Activated CD4-positive, alpha-beta T cell treated with anti-CD3 and anti-CD28 coated beads, Interleukin-2, amount 10 ng/mL, durations not matched to agents 24 days and 14 days (primary cell): ENCODE measurements at regions of chr2 and their contacts with region 1.

Region 1: DNA sequence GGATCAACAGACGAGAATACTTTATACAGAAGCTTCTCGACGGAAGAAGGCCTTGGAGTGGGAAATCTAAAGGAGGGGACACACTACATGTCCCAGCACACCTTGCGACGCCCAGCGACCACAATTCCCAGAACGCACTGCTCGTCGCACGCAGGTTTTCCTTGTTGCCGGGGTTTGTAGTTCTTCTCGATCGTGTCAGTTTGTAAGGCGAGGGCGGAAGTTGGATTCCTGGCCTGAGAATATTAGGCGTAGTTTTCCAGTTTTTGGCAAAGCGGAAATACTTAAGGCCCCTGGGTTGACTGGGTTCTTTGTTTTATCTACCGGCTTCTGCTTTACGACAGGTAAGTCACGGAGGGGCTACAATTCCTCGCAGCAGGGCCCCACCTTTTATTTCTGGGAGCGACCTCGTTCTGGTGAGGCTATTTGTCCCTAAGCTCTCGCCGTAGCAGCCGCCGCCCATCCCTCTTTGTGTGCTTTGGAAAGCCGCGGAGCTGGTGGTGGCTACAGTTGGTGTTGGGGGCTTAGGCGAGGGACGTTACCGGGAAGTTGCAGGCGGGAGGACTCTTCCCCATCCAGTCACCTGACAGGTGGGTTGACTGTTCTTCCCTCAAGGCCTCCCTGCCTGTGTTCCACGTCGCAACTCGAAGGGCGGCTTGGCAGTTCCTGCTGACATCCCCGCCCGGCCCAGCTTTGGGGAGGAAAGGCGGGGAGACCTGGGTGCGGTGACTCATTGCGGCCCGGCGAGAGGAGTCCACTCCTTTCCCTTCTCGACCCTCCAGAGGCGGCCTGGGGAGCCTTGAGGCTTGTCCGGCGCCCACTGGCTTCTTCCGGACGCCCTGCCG is at the start of gene DYNC1I2:
- DNase-seq: peak; percentile 92
- H3K4me3 Mint-ChIP-seq: peak within 1 kb of the TSS; percentile 80
- H3K27ac Mint-ChIP-seq: peak within 1 kb of the TSS; percentile 47
- H3K4me1 Mint-ChIP-seq: peaks cover 13% of the 10 kb centered on the region
- H3K27me3 Mint-ChIP-seq: peaks cover 15% of the 10 kb centered on the region
- total RNA-seq, gene DYNC1I2: 49.7 and 55.1 TPM in 2 replicates

Region 2: GRCh38 chr2:171574149-171574795 is 113.2 kb before region 1 on chr2:
- intact Hi-C with region 1: loop called (anchors 5 kb)
- DNase-seq: peak; percentile 95
- H3K4me3 Mint-ChIP-seq: no peak overlapping the region
- H3K27ac Mint-ChIP-seq: peak overlapping the region; percentile 35
- H3K4me1 Mint-ChIP-seq: peaks cover 4% of the 10 kb centered on the region
- H3K27me3 Mint-ChIP-seq: peaks cover 10% of the 10 kb centered on the region

Region 3: DNA sequence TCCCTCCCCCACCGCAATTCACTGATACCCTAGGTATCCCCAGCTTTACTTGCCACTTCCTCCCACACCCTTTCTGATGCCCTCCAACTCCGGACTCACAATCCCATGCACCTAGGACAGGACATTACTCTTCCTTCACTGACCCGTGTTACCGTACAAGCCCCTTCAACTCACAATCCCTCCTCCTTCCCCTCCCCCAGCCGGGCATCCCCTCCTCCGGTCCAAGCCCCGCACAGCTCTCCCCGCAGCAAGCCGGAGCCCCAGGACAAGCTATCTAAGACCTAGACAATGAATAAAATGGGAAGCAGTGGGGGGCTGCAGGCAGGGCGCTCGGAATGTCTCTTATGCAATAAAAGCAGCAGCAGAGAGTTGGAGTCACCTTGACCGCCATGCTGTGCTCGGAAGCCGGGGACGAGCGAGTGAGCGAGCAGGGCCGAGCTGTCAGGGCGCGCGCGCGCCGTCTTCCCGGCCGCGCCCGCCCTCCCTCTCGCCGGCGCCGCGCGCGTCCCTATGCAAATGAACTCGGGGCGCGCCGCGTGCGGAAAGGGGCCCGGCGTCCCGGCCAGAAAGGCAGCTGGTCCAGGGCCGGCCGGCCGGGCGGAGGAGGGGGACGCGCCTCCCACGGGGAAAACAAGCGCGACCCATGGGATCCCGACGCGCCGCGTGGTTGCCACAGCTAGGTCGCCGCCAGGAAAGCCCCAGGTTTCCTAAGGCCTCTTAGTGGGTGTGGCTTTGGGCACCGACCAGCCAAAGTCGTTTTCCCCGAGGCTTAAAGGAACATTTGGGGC is 206.5 kb after region 1 on chr2 and contains the start of gene SLC25A12:
- intact Hi-C with region 1: loop called (anchors 5 kb)
- DNase-seq: peak; percentile 94
- H3K4me3 Mint-ChIP-seq: peak within 1 kb of the TSS; percentile 95
- H3K27ac Mint-ChIP-seq: peak within 1 kb of the TSS; percentile 92
- H3K4me1 Mint-ChIP-seq: peaks cover 40% of the 10 kb centered on the region
- H3K27me3 Mint-ChIP-seq: peaks cover 2% of the 10 kb centered on the region
- total RNA-seq, gene SLC25A12: 30.9 and 34.3 TPM in 2 replicates

Region 4: GRCh38 chr2:171999604-172000469 is 312.3 kb after region 1 on chr2 and contains the start of gene METAP1D:
- intact Hi-C with region 1: loop called (anchors 10 kb)
- DNase-seq: peak; percentile 97
- H3K4me3 Mint-ChIP-seq: peak within 1 kb of the TSS; percentile 94
- H3K27ac Mint-ChIP-seq: peak within 1 kb of the TSS; percentile 100
- H3K4me1 Mint-ChIP-seq: peaks cover 19% of the 10 kb centered on the region
- H3K27me3 Mint-ChIP-seq: peaks cover 23% of the 10 kb centered on the region
- total RNA-seq, gene METAP1D: 5.0 and 8.1 TPM in 2 replicates